ENCODE measurements at regions of chr4 and their contacts with region 1.

Region 1: GRCh38 chr4:57043347-57044251 is 64.9 kb downstream of the POLR2B start:
- DNase-seq: no peak
- H3K4me3 ChIP-seq: no peak overlapping the region
- H3K27ac ChIP-seq: peak overlapping the region; percentile 49 to 73 (median 58)
- H3K4me1 ChIP-seq: peaks cover 0 to 30% of the 10 kb centered on the region in 2 donors
- H3K27me3 ChIP-seq: no peaks in the 10 kb centered on the region
- CTCF ChIP-seq: no peak
- POLR2A ChIP-seq: no peak

Region 2: GRCh38 chr4:56475917-56476316 is 567.7 kb before region 1 on chr4:
- intact Hi-C with region 1: no loop called
- DNase-seq: no peak
- H3K4me3 ChIP-seq: no peak overlapping the region
- H3K27ac ChIP-seq: no peak overlapping the region
- H3K4me1 ChIP-seq: no peaks in the 10 kb centered on the region
- H3K27me3 ChIP-seq: no peaks in the 10 kb centered on the region
- CTCF ChIP-seq: no peak
- POLR2A ChIP-seq: no peak

Region 3: GRCh38 chr4:57158221-57158620 is 114.6 kb after region 1 on chr4:
- intact Hi-C with region 1: loop called (anchors 10 kb)
- DNase-seq: no peak
- H3K4me3 ChIP-seq: no peak overlapping the region
- H3K27ac ChIP-seq: no peak overlapping the region
- H3K4me1 ChIP-seq: no peaks in the 10 kb centered on the region
- H3K27me3 ChIP-seq: no peaks in the 10 kb centered on the region
- CTCF ChIP-seq: no peak
- POLR2A ChIP-seq: no peak

Measured in thyroid gland (tissue), 4 donors.